Activated CD4-positive, alpha-beta memory T cell treated with anti-CD3 and anti-CD28 coated beads, Interleukin-2, amount 10 ng/mL, durations not matched to agents 7 days and 5 days (primary cell): ENCODE measurements at regions of chr12 and their contacts with region 1.

Region 1: DNA sequence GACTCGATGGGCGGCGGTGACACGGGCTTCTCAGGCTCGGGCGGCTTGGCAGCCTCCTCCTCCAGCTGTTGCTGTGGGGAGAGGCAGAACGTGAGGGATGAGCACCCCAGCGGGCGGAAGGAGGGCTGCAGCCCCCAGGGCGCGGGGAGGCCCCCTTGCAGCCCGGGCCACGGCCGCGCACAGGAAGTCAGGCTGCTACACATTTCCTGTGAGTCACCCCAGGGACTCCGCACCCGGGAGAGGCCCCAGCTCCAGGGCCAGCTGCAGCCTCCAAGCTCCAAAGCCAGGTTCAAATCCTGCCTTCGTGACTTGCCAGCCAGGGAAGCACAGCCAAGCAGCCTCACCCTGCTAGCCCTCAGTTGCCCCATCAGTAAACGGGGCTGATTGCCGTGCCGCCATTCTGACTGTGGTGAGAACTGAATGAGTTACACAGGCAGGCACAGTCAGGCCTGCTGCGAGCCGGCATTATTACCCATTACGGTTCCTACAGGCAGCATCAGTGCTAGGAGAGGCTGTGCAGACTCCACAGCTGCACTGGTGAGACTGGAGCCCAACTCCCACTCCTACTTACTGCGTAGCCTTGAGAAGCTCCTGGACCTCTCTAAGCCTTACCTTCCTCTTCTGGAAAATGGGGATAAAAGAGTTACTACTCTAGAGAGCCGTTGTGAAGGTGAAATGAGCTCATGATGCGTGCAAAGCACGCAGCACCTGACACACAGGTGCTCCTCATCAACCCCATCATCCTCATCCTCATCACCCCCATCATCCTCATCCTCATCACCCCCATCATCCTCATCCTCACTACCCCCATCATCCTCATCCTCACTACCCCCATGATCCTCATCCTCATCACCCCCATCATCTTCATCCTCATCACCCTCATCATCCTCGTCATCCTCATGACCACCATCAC is 100.9 kb downstream of the NCOR2 start:
- DNase-seq: peak; percentile 93
- H3K4me3 Mint-ChIP-seq: peak overlapping the region; percentile 65
- H3K27ac Mint-ChIP-seq: peak overlapping the region; percentile 80
- H3K4me1 Mint-ChIP-seq: peaks cover 58% of the 10 kb centered on the region
- H3K27me3 Mint-ChIP-seq: no peaks in the 10 kb centered on the region

Region 2: GRCh38 chr12:124453419-124454351 is 12.8 kb before region 1 on chr12:
- CTCF ChIA-PET with region 1: interaction called, 25 read pairs
- POLR2A ChIA-PET with region 1: interaction called, 95 read pairs
- DNase-seq: peak; percentile 90
- H3K4me3 Mint-ChIP-seq: peak overlapping the region; percentile 65
- H3K27ac Mint-ChIP-seq: peak overlapping the region; percentile 90
- H3K4me1 Mint-ChIP-seq: peaks cover 75% of the 10 kb centered on the region
- H3K27me3 Mint-ChIP-seq: no peaks in the 10 kb centered on the region

Region 3: DNA sequence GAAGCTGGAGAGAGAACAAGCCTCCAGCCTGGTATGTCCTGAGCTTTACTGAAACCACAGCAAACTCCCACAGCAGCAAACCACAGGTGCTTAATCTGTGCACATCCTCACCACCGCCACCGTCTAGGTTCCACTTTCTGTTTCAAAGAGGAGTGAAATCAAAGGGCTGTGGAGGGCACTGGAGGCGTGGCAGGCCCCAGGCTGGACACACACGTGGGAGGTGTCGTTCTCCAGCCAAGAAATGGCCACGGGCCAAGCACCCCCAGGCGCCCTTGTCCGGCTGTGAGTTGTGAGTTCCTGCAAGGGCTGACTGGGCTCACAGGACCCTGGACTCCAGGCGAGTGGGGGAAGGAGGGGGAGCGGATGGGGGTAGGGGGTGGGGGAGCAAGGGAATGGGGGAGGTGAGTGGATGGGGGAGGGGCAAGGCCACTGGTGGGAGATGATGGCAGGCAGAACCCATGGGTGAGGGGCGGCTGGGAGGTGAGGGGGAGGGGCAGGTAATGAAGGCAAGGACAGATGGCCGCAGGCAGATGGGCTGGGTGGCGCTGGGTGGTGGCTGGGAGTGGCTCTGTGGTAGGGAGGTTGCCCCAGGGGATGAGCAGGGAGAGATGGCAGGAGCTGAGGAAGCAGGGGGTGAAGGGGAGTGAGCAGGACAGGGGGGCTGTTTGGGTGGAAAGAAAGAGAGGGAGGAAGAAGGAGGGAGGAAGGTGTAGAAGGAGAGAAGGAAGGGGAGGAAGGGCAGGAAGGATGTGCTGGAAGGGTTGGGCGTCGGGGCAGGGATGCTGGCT is 14.2 kb after region 1 on chr12:
- CTCF ChIA-PET with region 1: interaction called, 4 read pairs
- POLR2A ChIA-PET with region 1: interaction called, 11 read pairs
- DNase-seq: peak; percentile 82
- H3K4me3 Mint-ChIP-seq: peak overlapping the region; percentile 46
- H3K27ac Mint-ChIP-seq: peak overlapping the region; percentile 40
- H3K4me1 Mint-ChIP-seq: peaks cover 40% of the 10 kb centered on the region
- H3K27me3 Mint-ChIP-seq: no peaks in the 10 kb centered on the region